Mucosa of descending colon (tissue), 3 donors: ENCODE measurements at regions of chr1 and their contacts with region 1.

Region 1: DNA sequence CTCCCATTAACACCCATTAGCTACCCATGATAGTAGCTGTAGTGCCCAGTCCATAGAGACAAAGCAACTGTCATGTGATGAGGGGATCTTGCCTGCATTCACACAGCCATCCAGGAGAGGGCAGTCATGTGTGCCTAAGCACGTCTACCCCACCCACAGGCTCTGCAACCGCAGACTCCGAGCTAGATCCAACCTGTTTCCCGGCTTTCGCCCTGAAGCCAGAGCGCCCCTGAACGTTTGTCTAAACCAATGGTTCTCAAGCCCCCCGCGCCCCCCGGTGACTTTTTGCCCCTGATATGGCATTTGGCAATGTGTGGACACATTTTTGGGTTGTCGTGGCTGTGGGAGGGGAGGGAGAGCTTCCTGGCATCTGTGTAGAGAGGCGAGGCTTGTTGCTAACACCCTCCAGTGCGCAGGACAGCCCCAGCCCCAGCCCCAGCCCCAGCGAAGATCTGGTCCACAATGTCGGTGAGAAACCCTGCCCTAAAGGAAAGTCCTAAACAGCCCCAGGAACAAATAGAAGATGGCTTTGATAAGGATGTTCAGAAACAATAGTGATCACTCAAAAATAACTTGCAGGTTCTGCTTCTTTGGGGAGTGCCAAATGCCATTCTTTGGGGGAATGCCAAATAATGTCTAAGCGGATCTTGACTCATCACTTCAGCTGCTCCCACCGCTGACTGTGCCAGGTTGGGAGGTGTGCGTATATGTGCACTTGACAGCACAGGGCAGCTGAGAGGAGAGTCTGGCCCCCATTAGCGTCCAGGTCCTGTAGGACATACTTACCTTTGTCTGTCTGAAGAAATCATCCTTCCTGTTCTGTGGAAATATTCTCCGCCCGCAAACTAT is 34.5 kb downstream of the SLC44A3 start:
- DNase-seq: peak; percentile 84 to 91 (median 88)
- ATAC-seq: peak; percentile 97
- H3K4me3 ChIP-seq: no peak overlapping the region
- H3K4me1 ChIP-seq: peaks cover 9% of the 10 kb centered on the region
- CTCF ChIP-seq: peak; percentile 79

Region 2: GRCh38 chr1:94926915-94927404 is 72.3 kb after region 1 on chr1 and contains the start of gene CNN3:
- intact Hi-C with region 1: loop called in 1 of 2 experiments (anchors 10 kb)
- DNase-seq: peak; percentile 89 to 96 (median 94)
- ATAC-seq: peak; percentile 90
- H3K4me3 ChIP-seq: peak within 1 kb of the TSS; percentile 75
- H3K4me1 ChIP-seq: peaks cover 34% of the 10 kb centered on the region
- CTCF ChIP-seq: no peak
- total RNA-seq, gene CNN3: 61.3 to 165 (median 129) TPM

Region 3: DNA sequence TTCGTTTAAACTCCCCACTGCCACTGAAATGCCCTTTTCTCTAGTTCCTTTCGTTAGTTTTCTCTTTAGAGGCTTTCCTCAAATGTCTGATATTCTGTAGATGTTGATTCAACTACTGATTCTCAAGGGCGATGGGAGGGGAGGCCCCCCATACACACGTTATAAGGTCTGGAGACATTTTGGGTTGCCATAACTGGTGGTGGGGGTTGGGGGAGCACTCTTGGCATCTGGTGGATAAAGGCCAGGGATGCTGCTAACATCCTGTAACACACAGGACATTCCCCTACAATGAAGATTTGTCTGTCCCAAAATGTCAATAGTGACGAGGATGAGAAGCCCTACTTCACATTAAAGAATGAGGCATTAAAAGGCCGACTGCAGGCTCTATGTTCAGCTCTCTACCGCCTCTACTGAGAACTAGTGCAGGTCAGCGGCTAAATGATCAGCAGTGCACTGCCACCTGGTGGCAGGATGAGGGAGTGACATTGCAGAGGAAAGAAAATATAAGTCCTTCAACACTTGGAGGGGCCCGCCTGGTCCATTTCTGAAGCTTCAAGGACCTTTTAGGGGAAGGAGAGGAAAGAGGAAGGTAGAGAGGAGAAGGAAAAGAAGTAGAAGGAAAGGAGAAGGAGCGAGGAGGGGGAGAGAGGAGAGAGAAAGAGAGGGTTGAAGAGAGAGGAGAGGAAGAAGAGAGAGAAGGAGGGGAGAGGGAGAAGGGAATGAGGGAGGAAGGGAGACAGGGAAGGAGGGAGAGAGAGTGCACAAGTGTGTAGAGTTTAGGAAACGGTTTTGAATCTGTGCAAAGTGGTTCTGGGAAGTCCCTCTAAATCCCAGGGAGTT is 188.7 kb after region 1 on chr1:
- intact Hi-C with region 1: loop called (anchors 2 kb)
- DNase-seq: peak; percentile 73 to 90 (median 84)
- ATAC-seq: peak; percentile 96
- H3K4me3 ChIP-seq: no peak overlapping the region
- H3K4me1 ChIP-seq: no peaks in the 10 kb centered on the region
- CTCF ChIP-seq: peak; percentile 93

Region 4: DNA sequence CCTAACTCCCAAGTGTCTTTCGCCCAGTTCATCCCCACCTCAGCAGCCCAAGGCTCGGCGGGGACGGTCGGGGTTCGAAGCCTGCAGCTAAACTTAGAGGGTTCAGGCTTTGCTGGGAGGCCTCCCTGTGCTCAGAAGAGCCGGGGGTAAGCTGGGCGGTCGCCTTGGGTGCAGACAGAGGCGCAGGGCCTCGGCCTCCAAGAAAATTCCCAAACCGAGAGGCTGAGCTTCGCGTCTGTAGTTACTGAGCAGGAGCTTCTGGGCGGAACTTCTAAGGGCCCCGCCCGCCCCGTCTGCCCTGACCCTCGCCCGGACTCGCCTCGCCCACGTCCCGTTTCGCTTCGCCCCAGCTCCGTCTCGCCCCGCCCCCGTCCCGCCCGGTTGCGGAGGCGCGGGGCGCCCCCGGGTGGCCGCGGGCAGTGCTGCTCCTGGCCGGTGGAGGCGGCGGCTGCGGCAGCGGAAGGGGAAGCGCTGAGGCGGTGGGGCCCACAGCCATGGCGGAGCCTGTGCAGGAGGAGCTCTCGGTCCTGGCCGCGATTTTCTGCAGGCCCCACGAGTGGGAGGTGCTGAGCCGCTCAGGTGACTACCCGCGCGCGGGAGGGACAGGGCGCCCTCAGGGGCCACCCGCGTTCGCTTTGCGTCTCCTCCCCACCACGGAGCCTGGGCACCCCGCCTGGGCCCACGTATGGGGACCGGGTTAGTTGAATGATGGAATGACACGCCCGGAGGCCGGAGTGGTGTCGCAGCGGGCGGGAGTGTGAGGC is 379.2 kb after region 1 on chr1 and contains the start of gene RWDD3:
- intact Hi-C with region 1: loop called in 1 of 2 experiments (anchors 10 kb)
- DNase-seq: peak; percentile 96 to 98 (median 96)
- ATAC-seq: peak; percentile 98
- H3K4me3 ChIP-seq: peak within 1 kb of the TSS; percentile 76
- H3K4me1 ChIP-seq: peaks cover 10% of the 10 kb centered on the region
- CTCF ChIP-seq: peak; percentile 97
- total RNA-seq, gene RWDD3: 14.2 to 16.9 (median 15.5) TPM